Heart left ventricle (tissue), 16 donors: ENCODE measurements at regions of chrX and their contacts with region 1.

Region 1: DNA sequence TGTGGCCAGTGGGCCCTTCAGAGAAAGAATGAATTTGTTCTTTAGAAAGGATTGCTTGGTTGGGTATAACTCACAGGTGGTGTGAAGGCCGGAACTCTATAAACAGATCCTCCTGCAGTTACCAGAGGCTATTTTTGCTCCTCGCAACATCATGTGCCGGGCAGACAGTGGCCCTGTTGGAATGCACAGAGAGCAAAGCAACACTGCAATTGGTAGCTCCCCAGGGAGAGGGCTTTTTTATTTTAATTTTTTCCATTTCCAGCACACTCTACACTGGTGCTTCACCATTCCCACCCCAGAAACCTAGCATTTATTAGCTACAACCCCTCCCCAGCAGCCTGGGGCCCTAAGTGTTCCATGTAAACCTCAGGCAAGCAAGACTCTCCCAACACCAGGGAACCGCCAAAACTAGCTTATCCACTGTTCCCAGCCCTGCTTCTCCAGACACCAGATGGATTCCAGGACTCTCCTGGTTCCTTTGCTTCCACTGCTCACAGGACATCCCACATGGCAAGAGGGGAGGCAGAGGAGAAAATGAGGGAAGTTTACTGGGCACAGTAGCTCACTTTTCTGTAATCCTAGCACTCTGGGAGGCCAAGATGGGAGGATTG is 75.1 kb upstream of the TMEM164 start:
- DNase-seq: peak in 4 of 5 donors; percentile 16 to 45 (median 24)
- ATAC-seq: peak; percentile 84 to 96 (median 90)
- H3K4me3 ChIP-seq: no peak overlapping the region
- H3K27ac ChIP-seq: peak overlapping the region; percentile 51 to 92 (median 77)
- H3K4me1 ChIP-seq: peaks cover 0 to 10% (median 0%) of the 10 kb centered on the region in 12 donors
- H3K27me3 ChIP-seq: peaks cover 0 to 9% (median 0%) of the 10 kb centered on the region in 9 donors
- CTCF ChIP-seq: no peak
- POLR2A ChIP-seq: no peak

Region 2: GRCh38 chrX:109990582-109991276 is 63.0 kb after region 1 on chrX:
- intact Hi-C with region 1: loop called in 1 of 10 experiments (anchors 10 kb)
- DNase-seq: no peak
- ATAC-seq: no peak
- H3K4me3 ChIP-seq: no peak overlapping the region
- H3K27ac ChIP-seq: no peak overlapping the region
- H3K4me1 ChIP-seq: no peaks in the 10 kb centered on the region
- H3K27me3 ChIP-seq: peaks cover 0 to 12% (median 0%) of the 10 kb centered on the region in 9 donors
- CTCF ChIP-seq: no peak
- POLR2A ChIP-seq: no peak

Region 3: DNA sequence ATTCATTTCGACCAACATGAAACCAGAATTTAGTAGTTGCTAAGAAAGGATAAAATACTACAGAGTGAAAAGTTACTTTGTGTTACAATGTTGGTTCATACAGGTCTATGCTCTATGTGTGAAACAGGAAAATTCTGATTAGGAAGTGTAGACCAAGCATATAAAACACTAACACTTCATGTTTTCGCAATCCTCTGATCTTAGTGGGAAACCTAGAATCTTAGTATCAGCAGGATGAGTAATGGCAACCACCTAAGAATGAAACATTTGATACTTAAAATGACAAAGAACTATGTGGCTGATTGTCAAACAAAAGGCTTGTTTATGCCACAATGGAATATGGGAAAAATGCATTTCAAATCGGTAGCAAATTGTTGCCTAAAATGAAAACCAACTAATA is 274.0 kb after region 1 on chrX:
- intact Hi-C with region 1: no loop called
- DNase-seq: no peak
- ATAC-seq: no peak
- H3K4me3 ChIP-seq: no peak overlapping the region
- H3K27ac ChIP-seq: no peak overlapping the region
- H3K4me1 ChIP-seq: no peaks in the 10 kb centered on the region
- H3K27me3 ChIP-seq: peaks cover 0 to 13% (median 0%) of the 10 kb centered on the region in 9 donors
- CTCF ChIP-seq: no peak
- POLR2A ChIP-seq: no peak